WTC11 (cell line): ENCODE measurements at regions of chr16 and their contacts with region 1.

Region 1: GRCh38 chr16:24428756-24429155 is 110.6 kb upstream of the RBBP6 start:
- DNase-seq: no peak
- ATAC-seq: no peak
- H3K4me3 Mint-ChIP-seq: no peak overlapping the region
- H3K27ac Mint-ChIP-seq: no peak overlapping the region
- H3K4me1 Mint-ChIP-seq: peaks cover 22% of the 10 kb centered on the region
- H3K27me3 Mint-ChIP-seq: peaks cover 16% of the 10 kb centered on the region
- CTCF ChIP-seq: no peak

Region 2: GRCh38 chr16:24367186-24367710 is 61.5 kb before region 1 on chr16:
- CTCF ChIA-PET with region 1: no interaction called
- POLR2A ChIA-PET with region 1: no interaction called
- DNase-seq: no peak
- ATAC-seq: no peak
- H3K4me3 Mint-ChIP-seq: no peak overlapping the region
- H3K27ac Mint-ChIP-seq: no peak overlapping the region
- H3K4me1 Mint-ChIP-seq: peaks cover 6% of the 10 kb centered on the region
- H3K27me3 Mint-ChIP-seq: peaks cover 5% of the 10 kb centered on the region; the same call in 1 of the 2 replicates
- CTCF ChIP-seq: no peak

Region 3: GRCh38 chr16:24409049-24409448 is 19.7 kb before region 1 on chr16:
- CTCF ChIA-PET with region 1: interaction called, 4 read pairs
- POLR2A ChIA-PET with region 1: interaction called, 11 read pairs
- DNase-seq: no peak
- ATAC-seq: peak; percentile 62
- H3K4me3 Mint-ChIP-seq: no peak overlapping the region
- H3K27ac Mint-ChIP-seq: no peak overlapping the region
- H3K4me1 Mint-ChIP-seq: peaks cover 2% of the 10 kb centered on the region; the same call in 1 of the 2 replicates
- H3K27me3 Mint-ChIP-seq: no peaks in the 10 kb centered on the region; the same call in 1 of the 2 replicates
- CTCF ChIP-seq: peak; percentile 26; the same call in 1 of the 2 replicates